Left lung (tissue), 14 donors: ENCODE measurements at regions of chr20 and their contacts with region 1.

Region 1: DNA sequence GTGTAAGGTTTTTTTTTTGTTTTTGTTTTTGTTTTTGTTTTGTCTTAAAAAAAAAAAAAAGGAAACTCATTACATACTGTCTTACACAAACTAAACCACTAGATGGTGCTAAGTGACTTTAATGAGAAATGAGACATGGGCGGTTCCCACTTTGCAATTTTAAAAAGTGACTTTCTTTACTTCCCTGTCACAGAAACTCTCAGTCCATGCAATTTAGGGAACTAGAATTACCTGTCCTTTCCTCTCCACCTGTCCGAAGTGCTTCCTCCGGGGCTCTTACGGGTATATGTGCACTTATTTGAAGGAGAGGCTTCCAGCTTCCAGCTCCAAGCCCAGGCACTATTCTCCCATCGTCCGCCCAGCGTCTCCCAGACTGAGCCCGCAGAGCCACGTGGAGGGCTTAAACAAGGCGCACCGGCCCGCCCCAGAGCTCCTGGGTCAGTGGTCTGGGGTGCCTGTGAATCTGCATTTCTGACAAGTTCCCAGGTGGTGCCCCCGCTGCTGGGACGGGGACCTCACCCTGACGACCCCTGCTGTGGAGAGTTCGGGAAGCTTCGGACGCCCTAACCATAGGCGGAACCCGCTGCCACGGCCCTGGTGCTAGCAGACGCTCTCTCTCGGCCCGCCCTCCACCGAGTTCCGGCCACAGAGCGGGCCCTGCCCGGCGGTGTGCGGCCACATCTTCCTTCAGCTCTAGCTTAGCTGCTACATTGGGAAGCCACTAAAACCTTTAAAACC is 26.1 kb downstream of the BFSP1 start:
- DNase-seq: peak; percentile 62 to 89 (median 66)
- ATAC-seq: peak; percentile 91
- H3K4me3 ChIP-seq: peak overlapping the region; percentile 39 to 43
- H3K27ac ChIP-seq: peak overlapping the region in 1 of 2 donors; percentile 66
- H3K4me1 ChIP-seq: peaks cover 10 to 15% of the 10 kb centered on the region in 2 donors
- H3K27me3 ChIP-seq: no peaks in the 10 kb centered on the region
- CTCF ChIP-seq: peak; percentile 64 to 68

Region 2: DNA sequence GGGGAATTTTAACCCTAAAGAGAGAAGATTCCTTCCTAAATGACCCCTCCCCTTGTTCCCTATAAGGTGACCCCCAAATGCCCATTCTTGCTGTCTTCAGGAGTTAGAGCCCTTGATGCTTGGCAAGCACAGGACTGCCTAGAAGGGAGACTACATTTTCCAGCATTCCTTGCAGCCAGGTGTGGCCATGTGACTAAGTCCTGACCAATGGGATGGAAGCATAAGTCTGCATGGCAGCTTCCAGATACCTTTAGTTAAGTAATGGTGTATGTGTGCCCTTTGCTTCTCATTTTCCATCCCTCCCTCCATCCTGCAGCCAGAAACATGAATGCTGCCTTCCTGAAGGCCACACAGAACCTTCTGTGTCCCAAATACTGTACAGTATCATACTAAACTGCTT is 20.6 kb after region 1 on chr20:
- intact Hi-C with region 1: no loop called
- DNase-seq: no peak
- ATAC-seq: peak; percentile 68
- H3K4me3 ChIP-seq: no peak overlapping the region
- H3K27ac ChIP-seq: no peak overlapping the region
- H3K4me1 ChIP-seq: peaks cover 0 to 3% of the 10 kb centered on the region in 2 donors
- H3K27me3 ChIP-seq: peaks cover 0 to 10% of the 10 kb centered on the region in 2 donors
- CTCF ChIP-seq: no peak

Region 3: DNA sequence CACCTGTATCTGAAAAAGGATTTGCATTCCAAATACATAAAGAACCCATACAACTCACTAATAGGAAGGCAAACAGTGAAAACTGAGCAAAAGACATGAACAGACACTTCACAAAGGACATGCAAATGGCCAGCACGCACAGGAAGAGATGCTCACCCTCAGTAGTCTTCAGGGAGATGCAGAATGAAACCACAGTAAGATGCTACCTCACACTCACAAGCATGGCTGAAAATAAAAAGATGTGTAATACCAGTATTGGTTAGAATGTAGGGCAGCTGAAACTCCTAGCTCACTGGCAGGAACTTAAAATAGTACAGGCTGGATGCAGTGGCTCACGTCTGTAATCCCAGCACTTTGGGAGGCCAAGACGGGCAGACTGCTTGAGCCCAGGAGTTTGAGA is 399.0 kb after region 1 on chr20:
- intact Hi-C with region 1: loop called in 1 of 2 experiments (anchors 10 kb)
- DNase-seq: no peak
- ATAC-seq: no peak
- H3K4me3 ChIP-seq: no peak overlapping the region
- H3K27ac ChIP-seq: no peak overlapping the region
- H3K4me1 ChIP-seq: no peaks in the 10 kb centered on the region
- H3K27me3 ChIP-seq: no peaks in the 10 kb centered on the region
- CTCF ChIP-seq: no peak

Region 4: GRCh38 chr20:18276821-18277220 is 771.8 kb after region 1 on chr20:
- intact Hi-C with region 1: loop called in 1 of 2 experiments (anchors 10 kb)
- DNase-seq: peak in 3 of 4 donors; percentile 49 to 66 (median 56)
- ATAC-seq: peak; percentile 100
- H3K4me3 ChIP-seq: no peak overlapping the region
- H3K27ac ChIP-seq: no peak overlapping the region
- H3K4me1 ChIP-seq: peaks cover 0 to 5% of the 10 kb centered on the region in 2 donors
- H3K27me3 ChIP-seq: peaks cover 4 to 22% of the 10 kb centered on the region in 2 donors
- CTCF ChIP-seq: peak; percentile 62 to 74